HepG2 (cell line): ENCODE measurements at regions of chr12 and their contacts with region 1.

Region 1: DNA sequence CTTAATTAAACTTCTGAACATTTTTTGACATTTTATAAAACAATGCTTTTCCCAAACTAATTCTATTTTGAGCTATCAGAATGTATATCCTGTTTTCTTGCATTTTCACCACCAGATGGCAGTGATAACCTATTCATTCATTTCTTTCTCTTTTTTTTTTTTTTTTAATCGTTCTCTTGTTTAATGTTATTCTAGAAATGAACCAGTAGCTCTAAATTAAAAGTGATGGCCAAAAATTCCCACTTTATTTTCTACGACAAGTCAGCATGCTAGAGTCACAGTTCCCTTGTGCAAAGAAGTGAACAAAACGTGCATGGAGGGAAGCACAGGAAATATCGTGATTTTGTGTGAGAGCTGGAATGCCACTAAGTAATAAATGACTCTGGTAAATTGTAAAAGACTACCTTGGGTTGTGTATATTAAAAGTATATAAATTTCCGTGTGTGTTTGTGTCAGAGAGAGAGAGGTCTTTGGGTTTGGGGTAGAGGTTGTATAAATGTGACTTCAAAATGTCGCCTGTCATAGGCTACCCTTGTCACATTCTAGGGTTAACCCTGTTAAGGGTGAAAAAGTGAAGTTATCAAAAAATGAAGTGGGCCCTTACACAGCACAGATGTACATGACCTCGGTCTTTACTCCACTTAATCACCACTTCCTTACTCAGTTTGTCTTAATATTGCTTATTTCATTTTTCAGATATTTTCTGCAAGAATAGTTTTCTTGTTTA is 40.4 kb upstream of the LDHB start:
- DNase-seq: peak; percentile 7
- ATAC-seq: no peak
- H3K4me3 ChIP-seq: no peak overlapping the region
- H3K27ac ChIP-seq: no peak overlapping the region
- H3K4me1 ChIP-seq: no peaks in the 10 kb centered on the region
- H3K27me3 ChIP-seq: no peaks in the 10 kb centered on the region
- CTCF ChIP-seq: peak; percentile 53
- EP300 ChIP-seq: no peak
- POLR2A ChIP-seq: no peak
- RAD21 ChIP-seq: no peak

Region 2: GRCh38 chr12:21324551-21324950 is 373.5 kb before region 1 on chr12:
- CTCF ChIA-PET with region 1: no interaction called
- POLR2A ChIA-PET with region 1: no interaction called
- in situ Hi-C with region 1: loop called (anchors 25 kb)
- intact Hi-C with region 1: no loop called
- DNase-seq: no peak
- ATAC-seq: no peak
- H3K4me3 ChIP-seq: no peak overlapping the region
- H3K27ac ChIP-seq: no peak overlapping the region
- H3K4me1 ChIP-seq: no peaks in the 10 kb centered on the region
- H3K27me3 ChIP-seq: no peaks in the 10 kb centered on the region
- CTCF ChIP-seq: no peak
- EP300 ChIP-seq: no peak
- POLR2A ChIP-seq: no peak
- RAD21 ChIP-seq: no peak

Region 3: DNA sequence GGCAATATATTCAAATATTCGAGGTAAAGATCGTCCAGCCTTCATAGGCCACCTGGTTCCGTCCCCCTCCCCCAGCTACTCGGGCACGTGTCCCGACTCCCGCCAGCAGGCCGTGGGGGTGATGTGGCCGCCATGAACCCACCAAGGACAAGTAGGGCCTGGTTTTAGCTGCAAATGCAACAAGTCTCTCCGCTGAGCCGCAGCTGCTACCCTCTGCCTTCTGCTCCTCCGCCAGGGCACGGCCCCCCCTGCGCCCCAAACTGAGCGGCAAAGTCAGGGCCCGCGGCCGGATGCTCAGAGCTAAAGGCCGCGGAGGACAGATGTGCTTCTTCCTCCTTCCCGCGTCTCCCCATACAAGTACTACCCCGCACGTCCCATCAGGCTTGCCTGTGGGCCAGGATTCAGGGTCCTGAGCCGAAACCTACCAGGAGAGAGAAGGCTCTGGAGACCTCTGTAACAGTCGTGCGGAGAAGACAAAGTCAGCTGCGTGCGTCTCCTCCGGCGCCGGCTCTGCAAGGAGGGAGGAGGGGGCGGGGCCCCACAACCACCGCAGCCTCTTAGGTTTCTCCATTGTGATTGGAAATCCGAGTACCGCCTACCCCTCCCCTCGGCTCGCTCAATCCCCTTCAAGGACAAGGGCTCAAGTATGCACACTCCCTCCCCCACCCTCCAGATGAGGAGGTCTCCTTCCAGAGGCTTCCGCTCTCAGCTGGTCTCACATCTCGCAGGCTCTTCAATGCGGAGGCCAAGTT is 40.6 kb before region 1 on chr12 and contains the start of gene LDHB:
- CTCF ChIA-PET with region 1: no interaction called
- POLR2A ChIA-PET with region 1: no interaction called
- in situ Hi-C with region 1: no loop called
- intact Hi-C with region 1: no loop called
- DNase-seq: no peak
- ATAC-seq: no peak
- H3K4me3 ChIP-seq: no peak within 1 kb of the TSS
- H3K27ac ChIP-seq: no peak within 1 kb of the TSS
- H3K4me1 ChIP-seq: no peaks in the 10 kb centered on the region
- H3K27me3 ChIP-seq: no peaks in the 10 kb centered on the region
- CTCF ChIP-seq: no peak
- EP300 ChIP-seq: no peak
- POLR2A ChIP-seq: no peak
- RAD21 ChIP-seq: no peak
- total RNA-seq, gene LDHB: not detected in 2 replicates

Region 4: DNA sequence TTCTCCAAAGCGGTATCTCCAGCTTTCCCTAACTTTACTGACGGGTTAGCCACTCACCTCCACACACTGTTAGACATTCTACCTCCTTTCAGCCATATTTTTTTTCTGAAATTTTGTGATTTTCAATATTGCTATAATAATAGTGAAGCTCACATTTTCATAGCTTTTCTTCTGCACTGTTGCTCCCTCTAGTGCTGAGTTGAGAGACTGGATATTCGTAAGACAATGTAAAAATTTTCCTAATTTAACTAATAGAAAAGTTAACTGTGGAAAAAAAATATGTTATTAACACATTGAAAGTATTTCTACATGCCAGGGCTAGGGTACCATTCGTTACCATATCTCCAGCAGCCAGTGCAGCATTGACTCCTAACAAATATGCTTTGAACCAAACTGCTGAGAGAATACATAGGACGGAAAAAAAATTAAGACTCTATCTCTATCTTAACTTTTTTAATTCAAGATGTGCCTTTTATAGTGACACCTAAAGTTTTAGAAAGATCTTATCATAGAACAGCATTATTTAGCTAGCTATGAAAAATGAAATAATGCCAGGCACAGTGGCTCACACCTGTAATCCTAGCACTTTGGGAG is 291.8 kb after region 1 on chr12:
- CTCF ChIA-PET with region 1: interaction called, 5 read pairs
- POLR2A ChIA-PET with region 1: no interaction called
- in situ Hi-C with region 1: loop called (anchors 5 kb)
- intact Hi-C with region 1: loop called (anchors 1 kb)
- DNase-seq: peak; percentile 1
- ATAC-seq: 0 out of 3 replicates have a peak, but pooled peaks have one; percentile 31
- H3K4me3 ChIP-seq: no peak overlapping the region
- H3K27ac ChIP-seq: no peak overlapping the region
- H3K4me1 ChIP-seq: no peaks in the 10 kb centered on the region
- H3K27me3 ChIP-seq: no peaks in the 10 kb centered on the region; a peak in 1 of 5 replicates
- CTCF ChIP-seq: no peak; the same call in 1 of the 2 replicates
- EP300 ChIP-seq: no peak
- POLR2A ChIP-seq: no peak
- RAD21 ChIP-seq: no peak

Region 5: DNA sequence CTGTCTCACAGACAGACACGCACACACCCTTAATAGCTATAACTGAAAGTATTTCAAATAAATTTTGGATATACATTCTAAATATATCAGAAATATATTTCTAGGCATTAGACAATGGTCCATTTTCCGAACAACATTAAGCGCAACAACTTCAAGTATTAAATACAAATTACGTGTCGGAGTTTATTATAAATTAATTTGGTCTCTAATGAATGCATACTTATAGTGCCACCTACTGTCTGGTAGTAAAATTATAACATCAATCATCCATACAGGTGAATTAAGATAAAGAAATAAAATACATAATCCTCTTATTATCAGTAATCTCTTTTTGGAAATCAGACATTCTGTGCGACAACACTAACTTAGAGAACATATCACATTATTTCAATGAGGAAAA is 320.8 kb after region 1 on chr12:
- CTCF ChIA-PET with region 1: interaction called, 17 read pairs
- POLR2A ChIA-PET with region 1: no interaction called
- in situ Hi-C with region 1: loop called (anchors 10 kb)
- intact Hi-C with region 1: loop called (anchors 1 kb)
- DNase-seq: no peak
- ATAC-seq: no peak
- H3K4me3 ChIP-seq: no peak overlapping the region
- H3K27ac ChIP-seq: no peak overlapping the region
- H3K4me1 ChIP-seq: peaks cover 13% of the 10 kb centered on the region
- H3K27me3 ChIP-seq: no peaks in the 10 kb centered on the region; a peak in 1 of 5 replicates
- CTCF ChIP-seq: 0 out of 2 replicates have a peak, but pooled peaks have one; percentile 22
- EP300 ChIP-seq: no peak
- POLR2A ChIP-seq: no peak
- RAD21 ChIP-seq: no peak

Region 6: GRCh38 chr12:22029991-22030390 is 331.9 kb after region 1 on chr12:
- CTCF ChIA-PET with region 1: no interaction called
- POLR2A ChIA-PET with region 1: no interaction called
- in situ Hi-C with region 1: loop called (anchors 10 kb)
- intact Hi-C with region 1: no loop called
- DNase-seq: no peak
- ATAC-seq: no peak
- H3K4me3 ChIP-seq: no peak overlapping the region
- H3K27ac ChIP-seq: no peak overlapping the region
- H3K4me1 ChIP-seq: peaks cover 8% of the 10 kb centered on the region
- H3K27me3 ChIP-seq: no peaks in the 10 kb centered on the region; a peak in 1 of 5 replicates
- CTCF ChIP-seq: no peak
- EP300 ChIP-seq: no peak
- POLR2A ChIP-seq: no peak
- RAD21 ChIP-seq: no peak

Region 7: DNA sequence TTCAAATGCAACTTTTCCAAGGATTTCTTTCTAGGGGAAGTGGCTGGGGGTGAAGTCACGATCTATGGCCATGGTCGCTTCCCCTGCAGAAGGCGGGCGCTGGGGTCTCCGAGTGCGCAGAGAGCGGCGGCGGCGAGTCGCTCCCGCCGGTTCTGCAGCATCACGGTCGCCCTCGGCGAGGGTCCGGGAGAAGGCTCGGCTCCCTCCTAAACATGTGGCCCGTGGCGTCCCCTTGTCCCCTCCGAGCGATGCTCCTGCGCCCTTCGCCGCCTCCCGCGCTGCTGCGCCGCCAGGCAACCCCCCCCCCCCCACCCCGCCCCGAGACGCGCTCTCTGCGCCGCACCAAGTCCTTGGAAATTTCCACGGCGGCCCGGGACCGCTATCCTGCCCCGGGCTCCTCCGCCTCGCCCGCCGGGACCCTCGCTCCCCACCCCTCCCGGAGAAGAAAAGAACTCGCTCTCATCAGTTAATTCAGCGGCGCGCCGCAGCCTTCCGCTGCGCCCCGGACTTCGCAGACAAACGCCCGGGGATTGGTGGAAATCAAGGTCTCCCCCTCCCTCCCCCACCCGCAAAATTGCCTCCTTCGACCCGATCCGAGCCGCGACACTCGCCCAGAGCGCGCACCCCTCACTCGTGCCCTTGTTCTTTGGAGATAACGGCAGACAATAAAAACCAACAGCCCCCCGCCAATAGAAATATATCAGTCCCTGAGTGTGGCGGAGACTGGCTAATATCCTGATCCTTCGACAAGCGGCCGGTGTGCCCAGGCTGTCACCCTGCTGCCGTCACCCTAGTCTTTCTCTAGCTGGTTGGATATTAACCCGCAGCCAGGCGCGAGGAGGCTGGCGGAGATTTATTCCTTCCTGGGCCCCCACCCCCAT is 636.6 kb after region 1 on chr12 and contains the start of gene ST8SIA1:
- CTCF ChIA-PET with region 1: no interaction called
- POLR2A ChIA-PET with region 1: no interaction called
- in situ Hi-C with region 1: no loop called
- intact Hi-C with region 1: loop called (anchors 2 kb)
- DNase-seq: peak; percentile 7
- ATAC-seq: peak; percentile 82
- H3K4me3 ChIP-seq: peak within 1 kb of the TSS; percentile 60 to 68 (median 64); a peak in 5 of 6 replicates
- H3K27ac ChIP-seq: no peak within 1 kb of the TSS
- H3K4me1 ChIP-seq: no peaks in the 10 kb centered on the region
- H3K27me3 ChIP-seq: peaks cover 0 to 24% of the 10 kb centered on the region in 2 experiments; a peak in 3 of 5 replicates
- CTCF ChIP-seq: no peak
- EP300 ChIP-seq: no peak
- POLR2A ChIP-seq: no peak
- RAD21 ChIP-seq: no peak
- total RNA-seq, gene ST8SIA1: not detected in 2 replicates

Region 8: DNA sequence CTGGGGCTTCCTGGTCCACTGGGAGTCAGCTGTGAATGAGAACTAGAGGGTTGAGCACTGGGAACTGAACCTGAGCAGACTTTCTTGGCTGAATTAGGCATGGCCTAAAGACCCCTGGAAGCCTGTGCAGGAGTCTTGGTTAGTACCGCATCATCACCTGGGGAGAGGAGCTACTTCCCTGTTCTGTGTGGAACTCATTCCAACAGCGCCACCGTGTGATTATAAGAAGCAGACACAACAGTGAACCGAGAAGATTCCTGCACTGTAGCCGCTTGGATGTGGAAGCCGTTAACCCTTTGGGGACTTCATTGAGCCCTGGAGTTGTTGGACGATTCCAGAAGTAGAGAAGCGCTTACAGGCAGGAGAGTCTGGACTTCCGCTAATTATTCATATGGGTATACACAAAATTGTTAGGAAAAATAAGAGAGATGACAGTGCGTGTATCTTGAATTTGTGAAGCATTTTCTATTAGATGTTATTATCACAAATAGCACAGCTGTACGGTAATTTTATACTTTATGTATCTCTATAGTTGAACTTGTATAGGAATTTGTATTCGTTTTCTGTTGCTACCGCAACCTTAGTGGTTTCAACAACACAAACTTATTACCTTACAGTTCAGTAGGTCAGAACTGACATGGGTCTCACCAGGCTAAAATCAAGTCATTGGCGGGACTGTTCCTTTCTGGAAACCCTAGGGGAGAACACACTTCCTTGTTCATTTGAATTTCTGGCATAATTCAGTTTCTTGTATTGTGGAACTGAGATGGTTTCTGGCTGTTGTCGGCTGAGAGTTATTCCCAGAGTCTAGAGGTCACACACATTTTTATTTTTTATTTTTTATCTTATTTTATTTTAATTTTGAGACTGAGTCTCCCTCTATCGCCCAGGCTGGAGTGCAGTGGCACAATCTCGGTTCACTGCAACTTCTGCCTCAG is 745.6 kb after region 1 on chr12:
- CTCF ChIA-PET with region 1: interaction called, 15 read pairs
- POLR2A ChIA-PET with region 1: no interaction called
- in situ Hi-C with region 1: loop called (anchors 25 kb)
- intact Hi-C with region 1: loop called (anchors 1 kb)
- DNase-seq: peak; percentile 82
- ATAC-seq: peak; percentile 100
- H3K4me3 ChIP-seq: no peak overlapping the region
- H3K27ac ChIP-seq: no peak overlapping the region
- H3K4me1 ChIP-seq: no peaks in the 10 kb centered on the region
- H3K27me3 ChIP-seq: no peaks in the 10 kb centered on the region; a peak in 1 of 5 replicates
- CTCF ChIP-seq: peak; percentile 92
- EP300 ChIP-seq: no peak
- POLR2A ChIP-seq: no peak
- RAD21 ChIP-seq: peak; percentile 72